ENCODE measurements at regions of chr10 and their contacts with region 1.

Region 1: GRCh38 chr10:44932517-44933450 is 21.6 kb downstream of the TMEM72 start:
- DNase-seq: peak; percentile 92 to 97
- H3K4me3 ChIP-seq: no peak overlapping the region
- H3K4me3 Mint-ChIP-seq: no peak overlapping the region
- H3K27ac Mint-ChIP-seq: no peak overlapping the region
- H3K4me1 ChIP-seq: peaks cover 28% of the 10 kb centered on the region
- H3K4me1 Mint-ChIP-seq: peaks cover 20% of the 10 kb centered on the region
- H3K27me3 ChIP-seq: no peaks in the 10 kb centered on the region
- H3K27me3 Mint-ChIP-seq: peaks cover 5% of the 10 kb centered on the region
- CTCF ChIP-seq: peak; percentile 98 to 99

Region 2: GRCh38 chr10:44742248-44742647 is 190.5 kb before region 1 on chr10:
- CTCF ChIA-PET with region 1: no interaction called
- POLR2A ChIA-PET with region 1: no interaction called
- intact Hi-C with region 1: no loop called
- DNase-seq: no peak
- H3K4me3 ChIP-seq: no peak overlapping the region
- H3K4me3 Mint-ChIP-seq: no peak overlapping the region
- H3K27ac Mint-ChIP-seq: no peak overlapping the region
- H3K4me1 ChIP-seq: 0 out of 2 replicates have a peak, but pooled peaks cover 5% of the 10 kb centered on the region
- H3K4me1 Mint-ChIP-seq: peaks cover 10% of the 10 kb centered on the region
- H3K27me3 ChIP-seq: no peaks in the 10 kb centered on the region
- H3K27me3 Mint-ChIP-seq: peaks cover 30% of the 10 kb centered on the region
- CTCF ChIP-seq: no peak

Region 3: GRCh38 chr10:44878706-44879530 is 53.9 kb before region 1 on chr10:
- CTCF ChIA-PET with region 1: no interaction called
- POLR2A ChIA-PET with region 1: no interaction called
- intact Hi-C with region 1: no loop called
- DNase-seq: peak; percentile 86 to 88
- H3K4me3 ChIP-seq: peak overlapping the region; percentile 20
- H3K4me3 Mint-ChIP-seq: peak overlapping the region; percentile 77
- H3K27ac Mint-ChIP-seq: no peak overlapping the region
- H3K4me1 ChIP-seq: no peaks in the 10 kb centered on the region
- H3K4me1 Mint-ChIP-seq: no peaks in the 10 kb centered on the region
- H3K27me3 ChIP-seq: peaks cover 6% of the 10 kb centered on the region
- H3K27me3 Mint-ChIP-seq: peaks cover 33% of the 10 kb centered on the region
- CTCF ChIP-seq: peak in 1 of 2 experiments; percentile 59

Region 4: GRCh38 chr10:44959247-44960087 is 26.7 kb after region 1 on chr10 and contains the start of gene RASSF4:
- CTCF ChIA-PET with region 1: interaction called, 15 read pairs
- POLR2A ChIA-PET with region 1: interaction called, 4 read pairs
- intact Hi-C with region 1: loop called (anchors 1 kb)
- DNase-seq: peak; percentile 97 to 99
- H3K4me3 ChIP-seq: peak within 1 kb of the TSS; percentile 82
- H3K4me3 Mint-ChIP-seq: peak within 1 kb of the TSS; percentile 78
- H3K27ac Mint-ChIP-seq: peak within 1 kb of the TSS; percentile 79
- H3K4me1 ChIP-seq: peaks cover 41% of the 10 kb centered on the region
- H3K4me1 Mint-ChIP-seq: peaks cover 40% of the 10 kb centered on the region
- H3K27me3 ChIP-seq: no peaks in the 10 kb centered on the region
- H3K27me3 Mint-ChIP-seq: no peaks in the 10 kb centered on the region
- CTCF ChIP-seq: no peak
- total RNA-seq, gene RASSF4: 40.8 and 55.6 TPM in 2 replicates

Region 5: GRCh38 chr10:44965651-44966097 is 32.9 kb after region 1 on chr10:
- CTCF ChIA-PET with region 1: interaction called, 15 read pairs
- POLR2A ChIA-PET with region 1: interaction called, 4 read pairs
- intact Hi-C with region 1: no loop called
- DNase-seq: no peak
- H3K4me3 ChIP-seq: no peak overlapping the region
- H3K4me3 Mint-ChIP-seq: peak overlapping the region; percentile 54
- H3K27ac Mint-ChIP-seq: peak overlapping the region; percentile 54
- H3K4me1 ChIP-seq: peaks cover 55% of the 10 kb centered on the region
- H3K4me1 Mint-ChIP-seq: peaks cover 50% of the 10 kb centered on the region
- H3K27me3 ChIP-seq: no peaks in the 10 kb centered on the region
- H3K27me3 Mint-ChIP-seq: no peaks in the 10 kb centered on the region
- CTCF ChIP-seq: no peak

Region 6: GRCh38 chr10:44990302-44990655 is 57.5 kb after region 1 on chr10:
- CTCF ChIA-PET with region 1: interaction called, 34 read pairs
- POLR2A ChIA-PET with region 1: interaction called, 3 read pairs
- intact Hi-C with region 1: loop called (anchors 1 kb)
- DNase-seq: peak; percentile 76 to 86
- H3K4me3 ChIP-seq: no peak overlapping the region
- H3K4me3 Mint-ChIP-seq: peak overlapping the region; percentile 37
- H3K27ac Mint-ChIP-seq: peak overlapping the region; percentile 86
- H3K4me1 ChIP-seq: peaks cover 51% of the 10 kb centered on the region
- H3K4me1 Mint-ChIP-seq: peaks cover 48% of the 10 kb centered on the region
- H3K27me3 ChIP-seq: no peaks in the 10 kb centered on the region
- H3K27me3 Mint-ChIP-seq: no peaks in the 10 kb centered on the region
- CTCF ChIP-seq: peak; percentile 93 to 95

Region 7: DNA sequence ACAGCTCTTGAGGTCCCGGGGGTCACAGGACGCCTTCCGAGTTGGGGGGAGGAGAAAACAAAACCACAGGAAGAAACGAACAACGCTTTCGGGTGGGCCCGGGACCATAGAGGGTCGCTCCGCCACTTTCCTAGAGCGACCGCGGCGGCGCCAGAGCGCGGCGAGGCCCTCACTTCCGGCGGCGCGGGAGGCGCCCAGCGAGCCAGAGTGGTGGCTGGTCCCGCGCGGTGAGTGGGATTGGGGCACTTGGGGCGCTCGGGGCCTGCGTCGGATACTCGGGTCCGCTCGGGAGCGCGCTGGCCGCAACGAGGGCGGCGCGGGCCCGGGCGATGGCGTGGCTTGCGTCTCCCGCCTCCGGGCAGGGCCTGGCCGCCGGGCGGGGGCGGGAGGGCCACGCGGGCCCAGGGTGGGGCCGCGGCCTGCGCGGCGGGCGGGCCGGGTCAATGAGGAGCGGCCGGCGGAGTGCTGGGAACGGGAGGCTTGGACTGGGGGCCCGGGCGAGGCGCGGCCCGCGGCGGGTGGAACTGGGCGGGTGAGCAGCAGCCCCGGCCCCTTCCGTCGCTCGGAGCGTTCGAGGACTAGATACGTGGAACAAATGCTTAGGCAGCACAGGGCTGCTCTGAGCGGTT is 68.1 kb after region 1 on chr10 and contains the start of gene ZNF22:
- CTCF ChIA-PET with region 1: interaction called, 27 read pairs
- POLR2A ChIA-PET with region 1: no interaction called
- intact Hi-C with region 1: loop called (anchors 1 kb)
- DNase-seq: peak; percentile 86 to 91
- H3K4me3 ChIP-seq: peak within 1 kb of the TSS; percentile 84
- H3K4me3 Mint-ChIP-seq: peak within 1 kb of the TSS; percentile 82
- H3K27ac Mint-ChIP-seq: peak within 1 kb of the TSS; percentile 94
- H3K4me1 ChIP-seq: peaks cover 31% of the 10 kb centered on the region
- H3K4me1 Mint-ChIP-seq: peaks cover 28% of the 10 kb centered on the region
- H3K27me3 ChIP-seq: no peaks in the 10 kb centered on the region
- H3K27me3 Mint-ChIP-seq: no peaks in the 10 kb centered on the region
- CTCF ChIP-seq: peak in 1 of 2 experiments; percentile 35
- total RNA-seq, gene ZNF22: 46.5 and 60.8 TPM in 2 replicates

Measured in Caco-2 (cell line).